ENCODE measurements at regions of chr3 and their contacts with region 1.

Region 1: DNA sequence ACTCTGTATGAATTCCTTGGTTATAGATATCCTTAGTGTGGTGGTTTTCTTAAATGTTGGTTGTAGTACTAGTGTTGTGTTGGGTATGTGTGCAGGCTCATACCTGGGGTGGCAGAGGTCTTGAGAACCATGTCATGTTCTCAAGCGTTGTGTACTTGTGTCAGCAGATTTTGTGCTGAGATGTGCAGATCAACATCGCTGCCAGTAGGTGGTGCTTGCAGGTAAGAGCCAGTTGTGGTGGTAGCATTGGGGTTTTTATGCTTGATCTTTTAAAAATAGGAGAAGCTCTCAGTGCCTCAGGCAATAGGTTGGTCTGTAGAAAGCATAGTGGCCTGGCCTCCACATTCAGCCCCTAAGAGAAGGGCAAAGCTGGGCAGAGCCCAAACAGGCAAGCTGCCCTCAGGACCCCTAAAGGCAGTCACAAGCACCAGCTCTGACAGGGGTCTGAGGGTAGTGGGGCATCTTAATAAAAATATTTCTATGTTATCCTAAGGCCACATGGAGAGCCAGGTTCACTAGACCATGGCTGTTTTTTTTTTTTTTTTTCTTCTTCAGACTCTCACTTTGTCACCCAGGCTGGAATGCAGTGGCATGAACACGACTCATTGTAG is 164.0 kb downstream of the IL20RB start:
- DNase-seq: peak; percentile 30 to 67 (median 66)
- H3K4me3 ChIP-seq: no peak overlapping the region
- H3K27ac ChIP-seq: no peak overlapping the region
- H3K4me1 ChIP-seq: no peaks in the 10 kb centered on the region
- H3K27me3 ChIP-seq: peaks cover 0 to 5% (median 0%) of the 10 kb centered on the region in 5 experiments

Region 2: GRCh38 chr3:137084586-137084985 is 37.2 kb before region 1 on chr3:
- CTCF ChIA-PET with region 1: no interaction called
- POLR2A ChIA-PET with region 1: no interaction called
- DNase-seq: no peak
- H3K4me3 ChIP-seq: no peak overlapping the region
- H3K27ac ChIP-seq: no peak overlapping the region
- H3K4me1 ChIP-seq: no peaks in the 10 kb centered on the region
- H3K27me3 ChIP-seq: peaks cover 0 to 8% (median 4%) of the 10 kb centered on the region in 5 experiments

Region 3: DNA sequence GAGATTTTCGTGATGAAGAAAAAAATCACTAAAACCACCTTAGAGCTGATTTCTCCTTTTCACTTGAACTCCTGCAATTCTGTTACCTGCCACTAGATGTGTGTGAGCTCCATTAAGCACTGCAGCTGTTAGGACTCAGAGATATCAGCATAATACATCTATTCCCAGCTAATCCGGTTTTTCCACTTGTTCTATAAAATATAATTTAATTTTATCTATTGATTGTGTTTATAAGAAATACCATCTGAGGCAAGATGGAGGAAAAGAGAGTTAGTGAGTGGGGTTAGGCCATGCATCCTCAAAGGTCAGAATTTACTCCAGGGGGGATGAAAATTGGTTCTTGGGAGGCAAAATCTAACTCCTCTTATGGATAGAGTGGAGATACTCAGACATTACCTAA is 11.3 kb before region 1 on chr3:
- CTCF ChIA-PET with region 1: interaction called, 19 read pairs
- POLR2A ChIA-PET with region 1: no interaction called
- DNase-seq: peak; percentile 6 to 52 (median 45)
- H3K4me3 ChIP-seq: no peak overlapping the region
- H3K27ac ChIP-seq: no peak overlapping the region
- H3K4me1 ChIP-seq: no peaks in the 10 kb centered on the region
- H3K27me3 ChIP-seq: peaks cover 0 to 15% (median 9%) of the 10 kb centered on the region in 5 experiments

Region 4: GRCh38 chr3:137191133-137191923 is 69.5 kb after region 1 on chr3:
- CTCF ChIA-PET with region 1: no interaction called
- POLR2A ChIA-PET with region 1: no interaction called
- DNase-seq: no peak
- H3K4me3 ChIP-seq: no peak overlapping the region
- H3K27ac ChIP-seq: no peak overlapping the region
- H3K4me1 ChIP-seq: no peaks in the 10 kb centered on the region
- H3K27me3 ChIP-seq: no peaks in the 10 kb centered on the region

Measured in common myeloid progenitor, CD34-positive (primary cell).